Activated CD8-positive, alpha-beta T cell treated with anti-CD3 and anti-CD28 coated beads for 36 hours (primary cell): ENCODE measurements at regions of chr5 and their contacts with region 1.

Region 1: DNA sequence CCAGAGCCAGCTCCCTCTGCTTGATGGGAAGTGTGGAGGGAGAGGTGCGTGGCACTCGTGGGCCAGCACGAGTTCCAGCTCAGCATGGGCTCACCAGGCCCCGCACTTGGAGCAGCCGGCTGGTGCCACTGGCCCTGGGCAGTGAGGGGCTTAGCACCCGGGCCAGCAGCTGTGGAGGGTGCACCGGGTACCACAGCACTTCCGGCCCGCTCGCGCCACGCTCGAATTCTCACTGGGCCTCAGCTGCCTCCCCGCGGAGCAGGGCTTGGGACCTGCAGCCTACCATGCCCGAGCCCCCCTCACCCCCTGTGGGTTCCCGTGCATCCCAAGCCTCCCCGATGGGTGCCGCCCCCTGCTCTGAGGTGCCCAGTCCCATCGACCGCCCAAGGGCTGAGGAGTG is 98.4 kb downstream of the DCP2 start:
- DNase-seq: no peak
- ATAC-seq: no peak
- H3K4me3 Mint-ChIP-seq: no peak overlapping the region
- H3K27ac Mint-ChIP-seq: no peak overlapping the region
- H3K4me1 Mint-ChIP-seq: peaks cover 24% of the 10 kb centered on the region
- H3K27me3 Mint-ChIP-seq: no peaks in the 10 kb centered on the region
- CTCF ChIP-seq: no peak

Region 2: GRCh38 chr5:113059232-113060040 is 15.6 kb before region 1 on chr5:
- CTCF ChIA-PET with region 1: interaction called, 20 read pairs
- POLR2A ChIA-PET with region 1: interaction called, 10 read pairs
- intact Hi-C with region 1: no loop called
- DNase-seq: no peak
- ATAC-seq: no peak
- H3K4me3 Mint-ChIP-seq: no peak overlapping the region
- H3K27ac Mint-ChIP-seq: no peak overlapping the region
- H3K4me1 Mint-ChIP-seq: peaks cover 54% of the 10 kb centered on the region
- H3K27me3 Mint-ChIP-seq: no peaks in the 10 kb centered on the region
- CTCF ChIP-seq: no peak

Region 3: GRCh38 chr5:113090336-113091106 is 15.5 kb after region 1 on chr5:
- CTCF ChIA-PET with region 1: interaction called, 11 read pairs
- POLR2A ChIA-PET with region 1: no interaction called
- intact Hi-C with region 1: no loop called
- DNase-seq: peak; percentile 64
- ATAC-seq: peak; percentile 90
- H3K4me3 Mint-ChIP-seq: no peak overlapping the region
- H3K27ac Mint-ChIP-seq: no peak overlapping the region
- H3K4me1 Mint-ChIP-seq: peaks cover 17% of the 10 kb centered on the region
- H3K27me3 Mint-ChIP-seq: no peaks in the 10 kb centered on the region
- CTCF ChIP-seq: no peak